B cell (primary cell): ENCODE measurements at regions of chr1 and their contacts with region 1.

Region 1: GRCh38 chr1:40668769-40669525 is 3.5 kb upstream of the RIMS3 start:
- DNase-seq: peak; percentile 90
- ATAC-seq: peak; percentile 71
- H3K4me3 ChIP-seq: peak overlapping the region in 4 of 5 experiments; percentile 28 to 69 (median 40)
- H3K4me3 Mint-ChIP-seq: peak overlapping the region; percentile 71
- H3K27ac ChIP-seq: no peak overlapping the region
- H3K27ac Mint-ChIP-seq: peak overlapping the region; percentile 20
- H3K4me1 ChIP-seq: peaks cover 12 to 27% of the 10 kb centered on the region in 2 donors
- H3K4me1 Mint-ChIP-seq: peaks cover 23% of the 10 kb centered on the region
- H3K27me3 ChIP-seq: no peaks in the 10 kb centered on the region
- H3K27me3 Mint-ChIP-seq: peaks cover 5% of the 10 kb centered on the region
- CTCF ChIP-seq: peak; percentile 94

Region 2: GRCh38 chr1:40531381-40532061 is 137.4 kb before region 1 on chr1 and contains the start of gene ZNF684:
- CTCF ChIA-PET with region 1: interaction called, 3 read pairs
- POLR2A ChIA-PET with region 1: no interaction called
- intact Hi-C with region 1: loop called (anchors 2 kb)
- DNase-seq: peak; percentile 91
- ATAC-seq: peak; percentile 98
- H3K4me3 ChIP-seq: peak within 1 kb of the TSS; percentile 50 to 94 (median 80)
- H3K4me3 Mint-ChIP-seq: peak within 1 kb of the TSS; percentile 100
- H3K27ac ChIP-seq: peak within 1 kb of the TSS; percentile 60 to 92
- H3K27ac Mint-ChIP-seq: peak within 1 kb of the TSS; percentile 96
- H3K4me1 ChIP-seq: peaks cover 19 to 22% of the 10 kb centered on the region in 2 donors
- H3K4me1 Mint-ChIP-seq: peaks cover 26% of the 10 kb centered on the region
- H3K27me3 ChIP-seq: peaks cover 0 to 3% (median 1%) of the 10 kb centered on the region in 4 experiments
- H3K27me3 Mint-ChIP-seq: peaks cover 5% of the 10 kb centered on the region
- CTCF ChIP-seq: no peak
- total RNA-seq, gene ZNF684: 6.3 and 7.4 TPM in 2 replicates

Region 3: DNA sequence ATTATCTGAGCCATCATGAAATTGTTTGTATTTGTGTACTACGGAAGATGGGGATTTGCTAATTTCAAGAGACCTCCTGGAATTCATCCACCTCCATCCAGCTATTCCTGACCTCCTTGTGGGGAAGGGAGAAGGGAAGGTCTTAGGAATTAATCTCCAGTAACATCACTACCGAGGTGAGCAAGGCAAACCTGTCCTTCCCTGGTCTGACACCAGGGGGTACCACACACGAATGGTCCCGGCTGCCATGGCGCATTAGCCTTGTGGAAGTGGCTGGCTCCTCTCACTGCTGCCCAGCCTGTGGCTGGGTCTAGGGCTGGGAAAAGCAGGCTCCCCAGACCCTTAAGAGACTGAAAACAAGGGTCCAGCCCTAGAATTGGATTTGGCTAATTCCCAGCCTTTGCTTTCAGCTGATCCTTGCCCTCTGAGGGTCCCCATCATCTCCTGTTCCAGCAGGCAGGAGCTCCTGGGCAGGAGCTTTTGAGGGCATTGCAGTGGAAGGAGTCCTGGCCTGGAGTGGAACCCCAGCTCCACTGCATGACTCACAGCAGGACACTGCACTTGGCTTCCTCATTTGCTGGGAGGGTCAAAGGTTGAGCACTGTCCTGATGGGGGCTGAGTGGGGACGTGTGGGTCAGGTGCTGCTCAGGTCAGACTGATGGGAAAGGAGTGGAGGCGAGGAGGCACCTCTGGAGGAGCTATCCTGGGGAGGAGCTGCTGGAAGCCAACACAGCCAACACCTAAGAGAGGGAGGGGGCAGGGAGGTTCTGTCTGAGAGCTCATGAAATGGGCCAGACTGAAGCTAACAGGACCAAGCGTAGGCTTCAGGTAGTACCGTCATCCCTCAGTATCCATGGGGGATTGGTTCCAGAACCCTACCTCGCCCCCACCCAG is 38.2 kb before region 1 on chr1:
- CTCF ChIA-PET with region 1: interaction called, 12 read pairs
- POLR2A ChIA-PET with region 1: no interaction called
- intact Hi-C with region 1: loop called (anchors 1 kb)
- DNase-seq: peak; percentile 49
- ATAC-seq: peak; percentile 43
- H3K4me3 ChIP-seq: no peak overlapping the region
- H3K4me3 Mint-ChIP-seq: no peak overlapping the region
- H3K27ac ChIP-seq: no peak overlapping the region
- H3K27ac Mint-ChIP-seq: no peak overlapping the region
- H3K4me1 ChIP-seq: peaks cover 12 to 18% of the 10 kb centered on the region in 2 donors
- H3K4me1 Mint-ChIP-seq: peaks cover 18% of the 10 kb centered on the region
- H3K27me3 ChIP-seq: peaks cover 0 to 5% (median 0%) of the 10 kb centered on the region in 4 experiments
- H3K27me3 Mint-ChIP-seq: peaks cover 2% of the 10 kb centered on the region
- CTCF ChIP-seq: peak; percentile 64

Region 4: DNA sequence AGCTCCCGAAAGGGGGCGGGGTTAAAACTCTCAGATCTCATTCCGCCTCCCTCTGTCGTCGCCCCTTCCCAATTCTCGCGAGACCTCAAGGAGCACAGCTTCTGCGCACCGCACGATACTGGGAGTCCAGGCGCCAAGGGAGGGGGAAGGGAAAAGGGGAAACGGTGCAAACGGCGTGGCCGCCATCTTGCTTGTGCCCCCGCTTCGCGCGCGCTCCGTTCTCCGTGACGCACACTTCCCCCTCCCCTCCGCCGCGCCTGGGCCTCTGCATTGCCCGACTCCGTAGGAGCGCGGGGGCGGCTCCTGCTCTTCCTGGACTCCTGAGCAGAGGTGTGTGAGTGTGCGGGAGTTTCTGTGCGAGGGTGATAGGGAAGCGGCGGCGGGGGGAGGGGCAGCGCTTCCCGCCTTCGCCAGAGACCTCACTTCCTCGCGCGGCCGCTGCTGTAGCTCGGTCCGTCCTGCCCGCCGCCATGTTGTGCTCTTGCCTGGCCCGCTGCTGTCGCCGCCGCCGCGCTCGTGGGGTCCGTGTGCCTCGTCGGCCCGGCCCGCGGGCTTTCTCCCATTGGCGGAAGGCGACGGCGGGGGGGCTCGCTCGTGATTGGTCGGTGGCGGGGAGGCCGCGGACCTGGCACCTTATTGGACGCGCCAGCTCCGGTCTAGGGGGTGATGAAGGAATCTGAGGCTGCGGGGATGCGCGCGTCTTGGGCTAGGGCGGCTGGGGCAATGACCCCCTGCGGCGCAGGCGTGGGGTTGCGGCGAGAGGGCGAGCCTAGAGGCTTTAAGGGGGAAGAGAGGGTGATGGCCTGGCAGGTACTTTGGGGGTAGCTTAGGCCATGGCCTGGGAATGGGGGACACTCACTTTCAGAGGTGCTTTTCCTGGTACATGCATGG is 22.8 kb after region 1 on chr1 and contains the start of gene NFYC:
- CTCF ChIA-PET with region 1: interaction called, 48 read pairs
- POLR2A ChIA-PET with region 1: interaction called, 12 read pairs
- intact Hi-C with region 1: loop called (anchors 1 kb)
- DNase-seq: peak; percentile 99
- ATAC-seq: peak; percentile 78
- H3K4me3 ChIP-seq: peak within 1 kb of the TSS; percentile 75 to 94 (median 91)
- H3K4me3 Mint-ChIP-seq: peak within 1 kb of the TSS; percentile 98
- H3K27ac ChIP-seq: peak within 1 kb of the TSS; percentile 99 to 100
- H3K27ac Mint-ChIP-seq: peak within 1 kb of the TSS; percentile 97
- H3K4me1 ChIP-seq: peaks cover 35 to 44% of the 10 kb centered on the region in 2 donors
- H3K4me1 Mint-ChIP-seq: peaks cover 66% of the 10 kb centered on the region
- H3K27me3 ChIP-seq: no peaks in the 10 kb centered on the region
- H3K27me3 Mint-ChIP-seq: no peaks in the 10 kb centered on the region
- CTCF ChIP-seq: no peak
- total RNA-seq, gene NFYC: 81.1 and 88.7 TPM in 2 replicates

Region 5: GRCh38 chr1:40760984-40761383 is 92.0 kb after region 1 on chr1:
- CTCF ChIA-PET with region 1: no interaction called
- POLR2A ChIA-PET with region 1: no interaction called
- intact Hi-C with region 1: no loop called
- DNase-seq: no peak
- ATAC-seq: no peak
- H3K4me3 ChIP-seq: no peak overlapping the region
- H3K4me3 Mint-ChIP-seq: no peak overlapping the region
- H3K27ac ChIP-seq: no peak overlapping the region
- H3K27ac Mint-ChIP-seq: no peak overlapping the region
- H3K4me1 ChIP-seq: peaks cover 8 to 26% of the 10 kb centered on the region in 2 donors
- H3K4me1 Mint-ChIP-seq: peaks cover 33% of the 10 kb centered on the region
- H3K27me3 ChIP-seq: no peaks in the 10 kb centered on the region
- H3K27me3 Mint-ChIP-seq: no peaks in the 10 kb centered on the region
- CTCF ChIP-seq: no peak

Region 6: GRCh38 chr1:40802078-40802741 is 133.3 kb after region 1 on chr1:
- CTCF ChIA-PET with region 1: no interaction called
- POLR2A ChIA-PET with region 1: no interaction called
- intact Hi-C with region 1: loop called (anchors 1 kb)
- DNase-seq: peak; percentile 88
- ATAC-seq: peak; percentile 95
- H3K4me3 ChIP-seq: peak overlapping the region; percentile 45 to 89 (median 58)
- H3K4me3 Mint-ChIP-seq: peak overlapping the region; percentile 86
- H3K27ac ChIP-seq: peak overlapping the region; percentile 25 to 39
- H3K27ac Mint-ChIP-seq: no peak overlapping the region
- H3K4me1 ChIP-seq: peaks cover 16 to 40% of the 10 kb centered on the region in 2 donors
- H3K4me1 Mint-ChIP-seq: peaks cover 30% of the 10 kb centered on the region
- H3K27me3 ChIP-seq: no peaks in the 10 kb centered on the region
- H3K27me3 Mint-ChIP-seq: no peaks in the 10 kb centered on the region
- CTCF ChIP-seq: no peak

Region 7: GRCh38 chr1:40979233-40980067 is 310.5 kb after region 1 on chr1 and contains the start of gene CTPS1:
- CTCF ChIA-PET with region 1: no interaction called
- POLR2A ChIA-PET with region 1: no interaction called
- intact Hi-C with region 1: loop called (anchors 5 kb)
- DNase-seq: peak; percentile 97
- ATAC-seq: peak; percentile 86
- H3K4me3 ChIP-seq: peak within 1 kb of the TSS; percentile 45 to 89 (median 82)
- H3K4me3 Mint-ChIP-seq: peak within 1 kb of the TSS; percentile 97
- H3K27ac ChIP-seq: peak within 1 kb of the TSS; percentile 82 to 87
- H3K27ac Mint-ChIP-seq: peak within 1 kb of the TSS; percentile 94
- H3K4me1 ChIP-seq: peaks cover 13 to 18% of the 10 kb centered on the region in 2 donors
- H3K4me1 Mint-ChIP-seq: peaks cover 15% of the 10 kb centered on the region
- H3K27me3 ChIP-seq: no peaks in the 10 kb centered on the region
- H3K27me3 Mint-ChIP-seq: no peaks in the 10 kb centered on the region
- CTCF ChIP-seq: peak; percentile 13
- total RNA-seq, gene CTPS1: 17.9 TPM in 2 replicates